ENCODE measurements at regions of chr5 and their contacts with region 1.

Region 1: GRCh38 chr5:151509231-151509630 is 61.8 kb downstream of the SLC36A1 start:
- DNase-seq: no peak
- ATAC-seq: no peak
- H3K4me3 ChIP-seq: no peak overlapping the region
- H3K27ac ChIP-seq: no peak overlapping the region
- H3K4me1 ChIP-seq: no peaks in the 10 kb centered on the region
- H3K27me3 ChIP-seq: no peaks in the 10 kb centered on the region
- CTCF ChIP-seq: no peak
- POLR2A ChIP-seq: no peak
- RAD21 ChIP-seq: no peak

Region 2: GRCh38 chr5:151252762-151253604 is 256.2 kb before region 1 on chr5 and contains the start of gene GM2A:
- CTCF ChIA-PET with region 1: no interaction called
- POLR2A ChIA-PET with region 1: interaction called, 17 read pairs
- dilution Hi-C with region 1: no loop called
- in situ Hi-C with region 1: no loop called
- intact Hi-C with region 1: no loop called
- DNase-seq: peak; percentile 99
- ATAC-seq: peak; percentile 96
- H3K4me3 ChIP-seq: peak within 1 kb of the TSS; percentile 95
- H3K27ac ChIP-seq: peak within 1 kb of the TSS; percentile 31
- H3K4me1 ChIP-seq: no peaks in the 10 kb centered on the region; the same call in 1 of the 2 replicates
- H3K27me3 ChIP-seq: peaks cover 10% of the 10 kb centered on the region
- CTCF ChIP-seq: no peak
- POLR2A ChIP-seq: 0 out of 2 replicates have a peak, but pooled peaks have one; percentile 30
- RAD21 ChIP-seq: no peak
- total RNA-seq, gene GM2A: 18.5 and 18.6 TPM in 2 replicates

Region 3: GRCh38 chr5:152151940-152152339 is 642.7 kb after region 1 on chr5:
- CTCF ChIA-PET with region 1: no interaction called
- POLR2A ChIA-PET with region 1: no interaction called
- dilution Hi-C with region 1: no loop called
- in situ Hi-C with region 1: no loop called
- intact Hi-C with region 1: no loop called
- DNase-seq: no peak
- ATAC-seq: no peak
- H3K4me3 ChIP-seq: no peak overlapping the region
- H3K27ac ChIP-seq: no peak overlapping the region
- H3K4me1 ChIP-seq: no peaks in the 10 kb centered on the region
- H3K27me3 ChIP-seq: no peaks in the 10 kb centered on the region
- CTCF ChIP-seq: no peak
- POLR2A ChIP-seq: no peak
- RAD21 ChIP-seq: no peak